Calu3 (cell line): ENCODE measurements at regions of chr1 and their contacts with region 1.

Region 1: GRCh38 chr1:240967070-240967724 is 355.2 kb upstream of the GREM2 start:
- DNase-seq: no peak
- H3K4me3 Mint-ChIP-seq: no peak overlapping the region
- H3K27ac Mint-ChIP-seq: no peak overlapping the region
- H3K4me1 Mint-ChIP-seq: no peaks in the 10 kb centered on the region
- H3K27me3 Mint-ChIP-seq: no peaks in the 10 kb centered on the region
- CTCF ChIP-seq: peak; percentile 50

Region 2: GRCh38 chr1:241156231-241156965 is 189.2 kb after region 1 on chr1:
- CTCF ChIA-PET with region 1: no interaction called
- intact Hi-C with region 1: loop called (anchors 10 kb)
- DNase-seq: peak; percentile 85
- H3K4me3 Mint-ChIP-seq: peak overlapping the region; percentile 45
- H3K27ac Mint-ChIP-seq: peak overlapping the region; percentile 92
- H3K4me1 Mint-ChIP-seq: peaks cover 21% of the 10 kb centered on the region
- H3K27me3 Mint-ChIP-seq: no peaks in the 10 kb centered on the region
- CTCF ChIP-seq: no peak

Region 3: DNA sequence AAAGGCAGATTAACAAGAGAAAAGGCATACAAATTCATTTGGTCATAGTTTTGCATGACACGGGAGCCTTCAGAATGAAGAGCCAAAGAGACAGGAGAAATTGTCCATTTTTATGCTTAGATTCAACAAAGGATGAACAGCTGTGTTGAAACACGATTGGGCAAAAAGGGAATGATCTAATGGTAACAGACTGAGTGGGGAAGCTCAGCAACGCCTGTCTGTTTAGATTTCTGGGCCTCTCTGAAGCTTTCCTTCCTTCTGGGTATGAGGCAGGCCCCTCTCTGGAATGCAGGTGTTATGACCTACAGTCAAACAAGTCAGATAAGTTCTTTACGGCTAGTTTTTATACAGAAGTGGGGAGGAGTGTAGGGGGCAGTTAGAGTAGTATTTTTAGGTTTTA is 235.2 kb after region 1 on chr1:
- CTCF ChIA-PET with region 1: no interaction called
- intact Hi-C with region 1: loop called (anchors 10 kb)
- DNase-seq: peak; percentile 56
- H3K4me3 Mint-ChIP-seq: peak overlapping the region; percentile 29
- H3K27ac Mint-ChIP-seq: peak overlapping the region; percentile 81
- H3K4me1 Mint-ChIP-seq: peaks cover 38% of the 10 kb centered on the region
- H3K27me3 Mint-ChIP-seq: no peaks in the 10 kb centered on the region
- CTCF ChIP-seq: no peak

Region 4: GRCh38 chr1:241408170-241408569 is 441.0 kb after region 1 on chr1:
- CTCF ChIA-PET with region 1: interaction called, 3 read pairs
- intact Hi-C with region 1: loop called (anchors 1 kb)
- DNase-seq: peak; percentile 18
- H3K4me3 Mint-ChIP-seq: no peak overlapping the region
- H3K27ac Mint-ChIP-seq: no peak overlapping the region
- H3K4me1 Mint-ChIP-seq: no peaks in the 10 kb centered on the region
- H3K27me3 Mint-ChIP-seq: peaks cover 14% of the 10 kb centered on the region
- CTCF ChIP-seq: peak; percentile 17

Region 5: DNA sequence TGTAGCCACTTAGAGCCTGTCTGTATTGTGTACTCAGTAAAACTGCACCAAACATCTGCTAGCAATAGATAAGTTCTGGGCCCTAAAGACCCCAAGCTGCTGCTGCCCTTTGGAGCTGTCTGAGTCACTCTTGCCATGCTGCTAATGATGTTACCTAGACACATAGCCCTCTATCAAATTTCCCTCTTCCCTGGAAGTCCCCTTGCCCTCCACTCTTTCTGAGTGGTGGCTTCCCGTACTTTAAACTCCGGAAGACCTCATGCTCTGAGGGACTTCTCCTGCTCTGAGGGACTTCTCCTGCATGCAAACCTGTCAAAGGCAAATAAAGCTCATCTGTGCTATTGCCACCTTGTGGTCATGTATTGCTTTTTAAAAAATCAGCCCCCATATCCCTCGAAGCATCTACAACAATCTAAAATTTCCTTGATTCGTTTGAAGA is 518.4 kb after region 1 on chr1:
- CTCF ChIA-PET with region 1: interaction called, 17 read pairs
- intact Hi-C with region 1: loop called (anchors 1 kb)
- DNase-seq: peak; percentile 21
- H3K4me3 Mint-ChIP-seq: no peak overlapping the region
- H3K27ac Mint-ChIP-seq: no peak overlapping the region
- H3K4me1 Mint-ChIP-seq: peaks cover 25% of the 10 kb centered on the region
- H3K27me3 Mint-ChIP-seq: no peaks in the 10 kb centered on the region
- CTCF ChIP-seq: peak; percentile 73

Region 6: DNA sequence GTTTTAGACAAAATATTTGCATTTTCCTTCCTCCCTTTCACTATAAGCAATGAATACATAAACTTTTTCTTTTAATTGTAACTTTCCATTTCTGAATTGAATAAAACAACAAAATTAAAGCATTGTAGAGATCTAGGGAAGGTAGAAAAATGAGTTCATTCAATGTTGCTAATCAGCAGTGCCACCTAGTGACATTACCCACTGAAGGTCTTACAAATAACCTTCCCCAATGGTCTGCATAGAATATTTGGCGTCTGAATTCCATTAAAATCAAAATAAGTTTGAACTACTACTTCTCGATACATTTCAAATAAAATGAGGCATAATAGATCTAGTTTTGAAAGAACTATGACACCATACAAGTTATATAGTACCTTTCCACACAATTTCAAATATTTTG is 532.7 kb after region 1 on chr1:
- CTCF ChIA-PET with region 1: no interaction called
- intact Hi-C with region 1: loop called (anchors 5 kb)
- DNase-seq: peak; percentile 28
- H3K4me3 Mint-ChIP-seq: no peak overlapping the region
- H3K27ac Mint-ChIP-seq: no peak overlapping the region
- H3K4me1 Mint-ChIP-seq: no peaks in the 10 kb centered on the region
- H3K27me3 Mint-ChIP-seq: no peaks in the 10 kb centered on the region
- CTCF ChIP-seq: no peak